HEK293T (cell line): ENCODE measurements at regions of chr3 and their contacts with region 1.

Region 1: DNA sequence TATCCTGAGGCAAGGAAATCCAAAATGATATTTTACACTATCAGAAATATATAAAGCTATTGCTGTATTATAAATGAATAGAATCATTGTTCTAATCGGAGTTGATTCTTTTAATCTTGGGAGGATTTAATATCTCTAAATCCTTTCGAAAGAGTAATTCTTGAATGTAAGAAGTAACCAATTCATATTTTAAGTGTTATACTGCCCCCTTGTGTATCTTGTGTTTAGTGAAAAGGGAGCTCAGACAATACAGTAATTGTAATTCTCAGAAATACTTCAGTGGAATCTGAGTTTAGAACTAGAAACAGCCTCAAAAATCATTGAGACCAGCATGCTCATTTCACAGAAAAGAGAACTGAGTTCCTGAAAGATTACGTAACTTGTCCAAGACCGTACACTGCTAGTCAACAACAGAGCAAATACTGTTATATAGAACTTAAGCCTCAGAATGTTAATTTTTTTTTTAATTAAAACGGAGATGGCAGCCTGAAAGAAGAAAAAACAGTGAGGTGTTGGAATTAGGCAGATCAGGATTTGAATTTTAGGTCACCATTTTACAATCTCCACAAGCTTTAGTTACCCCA is 42.9 kb downstream of the PLCH1 start:
- DNase-seq: peak; percentile 22

Region 2: GRCh38 chr3:155382396-155383042 is 319.5 kb before region 1 on chr3:
- CTCF ChIA-PET with region 1: interaction called, 21 read pairs
- POLR2A ChIA-PET with region 1: no interaction called
- DNase-seq: peak; percentile 76